Sigmoid colon (tissue), 7 donors: ENCODE measurements at regions of chr4 and their contacts with region 1.

Region 1: DNA sequence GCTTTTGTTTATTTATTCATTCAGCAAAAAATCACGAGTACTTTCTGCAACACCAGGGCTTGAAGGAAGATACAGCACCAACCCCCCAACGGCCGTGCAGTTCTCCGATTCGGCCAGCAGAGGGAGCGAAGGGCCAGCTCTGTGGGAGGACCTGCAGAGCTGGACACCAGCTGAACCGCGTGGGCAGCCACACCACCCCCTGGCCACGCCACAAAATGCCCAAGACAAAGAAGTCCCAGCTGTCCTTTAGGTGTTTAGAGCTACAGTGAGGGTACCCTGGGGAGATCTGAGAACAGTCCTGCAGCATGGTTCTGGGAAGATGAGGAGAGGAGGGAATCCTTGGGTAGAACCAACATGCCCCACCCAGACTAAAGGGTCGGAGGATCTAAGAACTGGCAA is 83.1 kb downstream of the RELL1 start:
- DNase-seq: peak; percentile 88
- H3K4me3 ChIP-seq: no peak overlapping the region
- H3K27ac ChIP-seq: no peak overlapping the region
- H3K4me1 ChIP-seq: peaks cover 0 to 6% (median 2%) of the 10 kb centered on the region in 4 donors
- H3K27me3 ChIP-seq: no peaks in the 10 kb centered on the region
- CTCF ChIP-seq: peak; percentile 85 to 99 (median 96)
- EP300 ChIP-seq: no peak
- POLR2A ChIP-seq: no peak

Region 2: GRCh38 chr4:37666625-37667071 is 63.6 kb after region 1 on chr4:
- intact Hi-C with region 1: no loop called
- DNase-seq: no peak
- H3K4me3 ChIP-seq: no peak overlapping the region
- H3K27ac ChIP-seq: peak overlapping the region; percentile 56 to 70 (median 62)
- H3K4me1 ChIP-seq: peaks cover 0 to 59% (median 50%) of the 10 kb centered on the region in 4 donors
- H3K27me3 ChIP-seq: no peaks in the 10 kb centered on the region
- CTCF ChIP-seq: no peak
- EP300 ChIP-seq: peak in 1 of 4 donors; percentile 42
- POLR2A ChIP-seq: no peak

Region 3: DNA sequence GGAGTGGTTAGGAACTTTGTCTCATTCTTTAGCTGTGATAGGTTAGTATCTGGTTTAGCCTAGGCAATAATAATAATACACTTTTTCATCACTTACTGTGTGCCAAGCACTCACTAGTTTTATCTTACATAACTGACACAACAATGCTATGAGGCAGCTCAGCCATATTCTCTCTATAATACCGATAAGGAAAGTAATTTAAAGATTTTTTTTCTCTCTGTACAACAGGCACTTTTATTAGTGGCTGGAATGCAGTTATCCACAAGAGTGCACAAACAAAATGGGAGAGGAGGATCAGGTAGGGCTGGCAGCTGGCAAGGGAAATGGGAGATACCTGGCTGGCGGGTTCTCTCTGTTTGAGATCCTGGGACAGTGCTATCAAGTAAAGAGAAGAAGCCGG is 75.6 kb after region 1 on chr4:
- intact Hi-C with region 1: no loop called
- DNase-seq: no peak
- H3K4me3 ChIP-seq: no peak overlapping the region
- H3K27ac ChIP-seq: no peak overlapping the region
- H3K4me1 ChIP-seq: peaks cover 0 to 46% (median 32%) of the 10 kb centered on the region in 4 donors
- H3K27me3 ChIP-seq: no peaks in the 10 kb centered on the region
- CTCF ChIP-seq: no peak
- EP300 ChIP-seq: no peak
- POLR2A ChIP-seq: no peak

Region 4: GRCh38 chr4:37793562-37793961 is 190.5 kb after region 1 on chr4:
- intact Hi-C with region 1: loop called (anchors 2 kb)
- DNase-seq: no peak
- H3K4me3 ChIP-seq: no peak overlapping the region
- H3K27ac ChIP-seq: no peak overlapping the region
- H3K4me1 ChIP-seq: no peaks in the 10 kb centered on the region
- H3K27me3 ChIP-seq: no peaks in the 10 kb centered on the region
- CTCF ChIP-seq: peak; percentile 14 to 55 (median 34)
- EP300 ChIP-seq: no peak
- POLR2A ChIP-seq: no peak

Region 5: DNA sequence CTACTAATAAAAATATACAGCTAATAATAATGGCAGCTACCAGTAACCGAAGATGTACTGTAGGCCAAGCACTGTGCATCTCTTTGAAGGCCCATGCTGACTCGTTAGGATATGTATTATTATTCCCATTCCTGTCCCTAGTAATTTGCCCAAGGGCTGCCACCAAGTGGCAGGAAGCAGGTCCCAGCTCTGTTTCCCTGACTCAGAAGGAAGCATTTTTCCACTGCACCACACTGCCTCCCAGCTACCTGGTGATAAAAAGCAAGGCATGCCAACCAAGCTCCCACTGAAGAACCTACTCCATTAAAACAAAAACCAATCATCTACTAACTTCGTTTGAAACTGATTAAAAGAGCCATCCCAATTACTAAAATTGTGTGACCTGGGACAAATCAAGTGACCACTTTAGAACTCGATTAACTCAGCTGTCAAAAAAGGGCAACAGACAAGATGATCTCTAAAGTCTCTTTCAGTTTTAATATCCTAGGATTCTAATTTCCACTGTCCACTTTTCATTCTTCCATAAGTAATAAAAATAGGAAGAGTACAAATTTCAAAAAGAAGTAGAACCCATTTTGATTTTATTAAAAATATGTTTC is 199.1 kb after region 1 on chr4:
- intact Hi-C with region 1: loop called (anchors 2 kb)
- DNase-seq: no peak
- H3K4me3 ChIP-seq: no peak overlapping the region
- H3K27ac ChIP-seq: no peak overlapping the region
- H3K4me1 ChIP-seq: peaks cover 0 to 18% (median 10%) of the 10 kb centered on the region in 4 donors
- H3K27me3 ChIP-seq: no peaks in the 10 kb centered on the region
- CTCF ChIP-seq: peak in 3 of 4 experiments; percentile 18 to 59 (median 38)
- EP300 ChIP-seq: no peak
- POLR2A ChIP-seq: no peak

Region 6: GRCh38 chr4:37826295-37827029 is 223.4 kb after region 1 on chr4 and contains the start of gene PGM2:
- intact Hi-C with region 1: loop called (anchors 1 kb)
- DNase-seq: peak; percentile 93
- H3K4me3 ChIP-seq: peak within 1 kb of the TSS; percentile 71 to 87 (median 83)
- H3K27ac ChIP-seq: peak within 1 kb of the TSS; percentile 83 to 94 (median 84)
- H3K4me1 ChIP-seq: peaks cover 0 to 34% (median 22%) of the 10 kb centered on the region in 4 donors
- H3K27me3 ChIP-seq: no peaks in the 10 kb centered on the region
- CTCF ChIP-seq: peak in 1 of 4 experiments; percentile 7
- EP300 ChIP-seq: peak in 1 of 4 donors; percentile 4
- POLR2A ChIP-seq: peak; percentile 76 to 88
- total RNA-seq, gene PGM2: 30.0 to 42.3 (median 33.8) TPM

Region 7: GRCh38 chr4:38034986-38035882 is 432.2 kb after region 1 on chr4:
- intact Hi-C with region 1: loop called (anchors 5 kb)
- DNase-seq: no peak
- H3K4me3 ChIP-seq: no peak overlapping the region
- H3K27ac ChIP-seq: peak overlapping the region; percentile 39 to 62 (median 57)
- H3K4me1 ChIP-seq: peaks cover 0 to 43% (median 33%) of the 10 kb centered on the region in 4 donors
- H3K27me3 ChIP-seq: no peaks in the 10 kb centered on the region
- CTCF ChIP-seq: peak; percentile 55 to 79 (median 65)
- EP300 ChIP-seq: no peak
- POLR2A ChIP-seq: no peak